Naive thymus-derived CD4-positive, alpha-beta T cell (primary cell): ENCODE measurements at regions of chr15 and their contacts with region 1.

Region 1: GRCh38 chr15:60740787-60741354 is 261.9 kb upstream of the ICE2 start:
- DNase-seq: no peak
- ATAC-seq: peak; percentile 63
- H3K4me3 ChIP-seq: no peak overlapping the region
- H3K4me3 Mint-ChIP-seq: no peak overlapping the region
- H3K27ac ChIP-seq: no peak overlapping the region
- H3K27ac Mint-ChIP-seq: peak overlapping the region in 1 of 9 donors; percentile 11
- H3K4me1 ChIP-seq: peaks cover 0 to 12% of the 10 kb centered on the region in 2 donors
- H3K4me1 Mint-ChIP-seq: peaks cover 0 to 15% (median 7%) of the 10 kb centered on the region in 7 donors
- H3K27me3 ChIP-seq: no peaks in the 10 kb centered on the region
- H3K27me3 Mint-ChIP-seq: no peaks in the 10 kb centered on the region

Region 2: DNA sequence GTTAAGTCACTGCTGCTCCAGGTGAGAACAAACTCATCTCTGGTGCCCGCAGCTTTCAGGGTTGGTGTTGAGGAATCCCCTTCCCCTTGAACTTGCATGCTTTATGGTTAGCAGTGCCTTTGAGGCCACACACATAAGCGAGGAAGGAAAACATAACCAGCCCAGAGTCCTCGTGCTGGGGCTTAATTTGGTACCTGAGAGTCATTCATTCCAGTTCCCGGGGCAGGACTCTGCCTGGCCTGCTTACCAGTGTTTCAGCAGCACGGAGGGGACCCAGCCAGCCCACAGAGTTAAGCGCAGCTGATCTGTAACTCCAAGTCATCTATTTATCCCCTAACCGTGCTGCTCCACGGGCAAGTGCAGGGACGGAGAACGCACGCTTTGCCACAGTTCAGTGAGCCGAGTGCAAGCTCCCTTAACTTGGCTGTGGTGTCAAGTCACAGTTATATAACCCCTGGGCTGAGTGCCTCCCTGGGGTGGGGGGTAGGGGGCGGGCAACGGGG is 40.4 kb after region 1 on chr15:
- CTCF ChIA-PET with region 1: no interaction called
- POLR2A ChIA-PET with region 1: no interaction called
- intact Hi-C with region 1: no loop called
- DNase-seq: no peak
- ATAC-seq: no peak
- H3K4me3 ChIP-seq: no peak overlapping the region
- H3K4me3 Mint-ChIP-seq: no peak overlapping the region
- H3K27ac ChIP-seq: no peak overlapping the region
- H3K27ac Mint-ChIP-seq: no peak overlapping the region
- H3K4me1 ChIP-seq: no peaks in the 10 kb centered on the region
- H3K4me1 Mint-ChIP-seq: peaks cover 0 to 26% (median 10%) of the 10 kb centered on the region in 7 donors
- H3K27me3 ChIP-seq: no peaks in the 10 kb centered on the region
- H3K27me3 Mint-ChIP-seq: no peaks in the 10 kb centered on the region

Region 3: DNA sequence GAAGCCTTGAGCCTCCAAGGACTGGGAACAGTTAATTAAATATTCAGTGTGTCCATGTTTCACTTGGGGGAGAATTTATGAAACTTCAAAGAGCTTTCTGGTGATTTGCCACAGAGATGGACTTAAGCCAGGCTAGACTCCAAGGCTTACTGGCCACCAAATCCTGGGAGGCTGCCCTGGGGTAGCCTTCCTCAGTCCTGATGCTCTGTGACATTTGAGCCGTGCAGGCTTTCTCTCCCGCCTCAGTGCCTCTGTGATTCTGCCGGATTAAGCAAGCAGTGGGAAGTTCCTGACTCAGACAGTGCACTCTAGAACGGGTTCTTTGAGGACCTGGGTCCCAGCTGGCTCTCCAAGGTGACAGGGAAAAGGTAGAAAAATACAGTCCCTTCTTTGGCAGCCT is 52.8 kb after region 1 on chr15:
- CTCF ChIA-PET with region 1: interaction called, 7 read pairs
- POLR2A ChIA-PET with region 1: no interaction called
- intact Hi-C with region 1: loop called in 1 of 2 experiments (anchors 5 kb)
- DNase-seq: no peak
- ATAC-seq: no peak
- H3K4me3 ChIP-seq: no peak overlapping the region
- H3K4me3 Mint-ChIP-seq: no peak overlapping the region
- H3K27ac ChIP-seq: no peak overlapping the region
- H3K27ac Mint-ChIP-seq: no peak overlapping the region
- H3K4me1 ChIP-seq: peaks cover 12 to 20% of the 10 kb centered on the region in 2 donors
- H3K4me1 Mint-ChIP-seq: peaks cover 14 to 44% (median 28%) of the 10 kb centered on the region in 7 donors
- H3K27me3 ChIP-seq: no peaks in the 10 kb centered on the region
- H3K27me3 Mint-ChIP-seq: no peaks in the 10 kb centered on the region